OCI-LY7 (cell line): ENCODE measurements at regions of chr9 and their contacts with region 1.

Region 1: GRCh38 chr9:96217754-96218693 is 84.0 kb downstream of the HSD17B3 start:
- DNase-seq: peak; percentile 60
- H3K4me3 ChIP-seq: peak overlapping the region; percentile 24
- H3K27ac ChIP-seq: no peak overlapping the region
- H3K4me1 ChIP-seq: no peaks in the 10 kb centered on the region
- CTCF ChIP-seq: peak; percentile 92

Region 2: DNA sequence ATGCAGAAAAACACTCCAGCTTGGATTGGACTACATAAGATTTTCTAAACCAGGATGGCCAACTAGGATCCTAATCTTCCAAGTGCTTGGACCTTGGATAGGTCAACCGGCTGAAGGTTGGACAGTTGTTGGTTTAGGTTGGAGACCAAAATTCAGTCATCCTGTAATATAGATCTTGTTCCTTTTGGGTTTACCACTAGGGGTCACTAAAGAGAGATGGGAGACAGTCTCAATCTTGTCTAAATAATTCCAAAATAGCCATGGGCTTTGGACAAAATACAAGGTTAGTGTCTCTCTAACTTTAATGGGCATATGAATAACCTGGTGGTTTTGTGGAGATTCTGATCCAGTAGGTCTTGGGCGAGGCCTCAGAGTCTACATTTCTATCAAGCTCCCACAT is 491.3 kb before region 1 on chr9:
- CTCF ChIA-PET with region 1: no interaction called
- POLR2A ChIA-PET with region 1: no interaction called
- intact Hi-C with region 1: loop called (anchors 5 kb)
- DNase-seq: peak; percentile 35
- H3K4me3 ChIP-seq: no peak overlapping the region
- H3K27ac ChIP-seq: no peak overlapping the region
- H3K4me1 ChIP-seq: peaks cover 12% of the 10 kb centered on the region
- CTCF ChIP-seq: peak; percentile 81

Region 3: DNA sequence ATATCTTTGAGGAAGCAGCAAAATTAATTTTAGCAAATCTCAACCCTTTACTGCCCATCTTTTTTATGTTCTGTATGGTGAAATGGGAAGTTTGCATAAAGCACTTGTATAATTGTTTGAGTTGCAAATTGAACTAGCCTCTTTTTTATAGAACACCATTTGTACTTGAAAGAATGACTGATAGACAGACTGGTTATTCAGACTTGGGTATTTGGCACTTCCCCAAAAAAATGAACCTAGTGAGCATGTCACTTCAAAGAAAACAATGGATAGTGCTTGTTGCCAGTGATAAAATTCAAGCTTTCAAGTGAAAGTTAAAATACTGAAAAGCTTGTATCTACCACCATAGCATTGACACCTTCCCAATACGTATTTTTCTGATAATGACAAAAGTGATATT is 226.7 kb before region 1 on chr9:
- CTCF ChIA-PET with region 1: no interaction called
- POLR2A ChIA-PET with region 1: no interaction called
- intact Hi-C with region 1: loop called (anchors 5 kb)
- DNase-seq: no peak
- H3K4me3 ChIP-seq: no peak overlapping the region
- H3K27ac ChIP-seq: no peak overlapping the region
- H3K4me1 ChIP-seq: no peaks in the 10 kb centered on the region
- CTCF ChIP-seq: no peak